ENCODE measurements at regions of chr17 and their contacts with region 1.

Region 1: GRCh38 chr17:43521389-43521788 is 24.8 kb downstream of the ETV4 start:
- DNase-seq: no peak
- ATAC-seq: no peak
- H3K4me3 ChIP-seq: no peak overlapping the region
- H3K27ac ChIP-seq: no peak overlapping the region
- H3K4me1 ChIP-seq: no peaks in the 10 kb centered on the region; a peak in 2 of 5 replicates
- H3K27me3 ChIP-seq: no peaks in the 10 kb centered on the region
- CTCF ChIP-seq: no peak
- EP300 ChIP-seq: no peak
- POLR2A ChIP-seq: no peak
- RAD21 ChIP-seq: no peak

Region 2: GRCh38 chr17:43673516-43674323 is 152.3 kb after region 1 on chr17:
- CTCF ChIA-PET with region 1: interaction called, 20 read pairs
- POLR2A ChIA-PET with region 1: no interaction called
- in situ Hi-C with region 1: no loop called
- intact Hi-C with region 1: loop called (anchors 2 kb)
- DNase-seq: peak; percentile 62 to 72 (median 66)
- ATAC-seq: peak; percentile 78
- H3K4me3 ChIP-seq: no peak overlapping the region
- H3K27ac ChIP-seq: no peak overlapping the region
- H3K4me1 ChIP-seq: peaks cover 0 to 6% of the 10 kb centered on the region in 2 experiments; a peak in 2 of 5 replicates
- H3K27me3 ChIP-seq: peaks cover 7 to 37% of the 10 kb centered on the region in 2 experiments; a peak in 3 of 5 replicates
- CTCF ChIP-seq: peak; percentile 82 to 94 (median 94)
- EP300 ChIP-seq: no peak
- POLR2A ChIP-seq: no peak
- RAD21 ChIP-seq: peak; percentile 76 to 91

Measured in K562 (cell line).